ENCODE measurements at regions of chr5 and their contacts with region 1.

Region 1: DNA sequence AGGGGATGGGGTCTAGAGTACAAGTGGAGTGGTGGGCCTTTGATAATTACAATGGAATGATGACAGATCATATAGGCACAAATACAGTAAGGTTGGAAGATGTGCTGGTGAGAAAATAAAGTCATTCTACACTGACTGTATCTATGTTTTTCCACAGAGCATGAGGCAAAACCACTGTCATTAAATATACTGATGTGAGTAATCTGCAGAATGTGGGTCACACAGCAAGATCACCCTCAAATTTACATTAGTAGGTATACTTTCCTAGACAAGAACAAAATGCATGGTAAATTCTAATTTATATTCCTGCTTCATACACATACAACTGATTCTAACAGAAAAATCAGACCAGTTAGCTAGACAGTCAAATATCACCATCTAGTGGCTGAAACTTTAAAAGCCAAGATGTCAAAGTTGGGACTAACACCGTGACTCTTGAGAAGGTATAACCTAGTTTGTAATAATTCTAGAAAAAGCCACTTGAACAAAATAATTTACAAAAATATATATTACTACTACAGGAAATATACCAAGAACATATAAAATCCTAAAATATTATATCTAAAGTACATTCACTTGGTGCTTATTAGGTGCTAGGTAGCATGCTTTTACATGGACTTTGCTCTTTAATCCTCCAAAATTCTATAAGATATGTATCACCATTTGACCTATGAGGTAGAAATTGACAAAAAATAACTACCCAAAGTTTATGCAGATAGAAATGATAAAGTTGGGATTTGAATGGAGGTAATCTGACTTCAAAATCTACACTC is 19.5 kb downstream of the TTC33 start:
- DNase-seq: peak; percentile 48
- ATAC-seq: peak; percentile 69; the same call in 2 of the 3 replicates
- H3K4me3 ChIP-seq: no peak overlapping the region
- H3K27ac ChIP-seq: no peak overlapping the region
- H3K4me1 ChIP-seq: peaks cover 24% of the 10 kb centered on the region
- H3K27me3 ChIP-seq: no peaks in the 10 kb centered on the region
- CTCF ChIP-seq: peak; percentile 72
- EP300 ChIP-seq: no peak
- POLR2A ChIP-seq: no peak
- RAD21 ChIP-seq: peak; percentile 52; the same call in 1 of the 2 replicates

Region 2: DNA sequence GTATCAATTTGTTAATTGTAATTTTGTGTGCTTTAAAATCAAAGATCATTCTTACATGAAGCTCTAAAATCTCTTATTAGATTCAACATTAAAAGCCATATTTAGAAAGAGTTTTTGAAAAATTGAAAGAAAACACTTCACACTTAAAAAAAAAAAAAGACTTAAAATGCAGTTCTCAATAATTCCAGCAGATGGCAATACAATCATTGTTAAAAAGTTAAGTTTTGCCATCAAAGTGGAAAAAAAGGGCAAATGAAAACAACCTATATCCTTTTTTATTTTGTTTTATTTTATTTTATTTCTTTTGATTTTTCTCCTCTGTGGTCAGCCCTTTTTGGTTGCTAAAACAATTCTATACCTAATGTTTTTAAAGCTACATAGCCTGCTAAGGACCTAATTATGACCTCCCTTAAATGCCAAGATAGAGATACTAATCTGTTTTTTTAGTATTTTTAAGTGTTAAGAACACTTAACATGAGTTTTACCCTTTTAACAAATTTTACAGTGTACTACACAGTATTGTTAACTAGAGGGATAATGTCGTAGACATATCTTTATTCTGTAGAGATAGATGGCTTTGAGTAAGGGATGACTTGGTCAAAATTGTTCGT is 1157.3 kb before region 1 on chr5:
- CTCF ChIA-PET with region 1: no interaction called
- POLR2A ChIA-PET with region 1: no interaction called
- in situ Hi-C with region 1: no loop called
- intact Hi-C with region 1: loop called (anchors 5 kb)
- DNase-seq: no peak
- ATAC-seq: no peak
- H3K4me3 ChIP-seq: no peak overlapping the region
- H3K27ac ChIP-seq: no peak overlapping the region
- H3K4me1 ChIP-seq: no peaks in the 10 kb centered on the region
- H3K27me3 ChIP-seq: no peaks in the 10 kb centered on the region
- CTCF ChIP-seq: no peak
- EP300 ChIP-seq: no peak
- POLR2A ChIP-seq: no peak
- RAD21 ChIP-seq: no peak

Region 3: DNA sequence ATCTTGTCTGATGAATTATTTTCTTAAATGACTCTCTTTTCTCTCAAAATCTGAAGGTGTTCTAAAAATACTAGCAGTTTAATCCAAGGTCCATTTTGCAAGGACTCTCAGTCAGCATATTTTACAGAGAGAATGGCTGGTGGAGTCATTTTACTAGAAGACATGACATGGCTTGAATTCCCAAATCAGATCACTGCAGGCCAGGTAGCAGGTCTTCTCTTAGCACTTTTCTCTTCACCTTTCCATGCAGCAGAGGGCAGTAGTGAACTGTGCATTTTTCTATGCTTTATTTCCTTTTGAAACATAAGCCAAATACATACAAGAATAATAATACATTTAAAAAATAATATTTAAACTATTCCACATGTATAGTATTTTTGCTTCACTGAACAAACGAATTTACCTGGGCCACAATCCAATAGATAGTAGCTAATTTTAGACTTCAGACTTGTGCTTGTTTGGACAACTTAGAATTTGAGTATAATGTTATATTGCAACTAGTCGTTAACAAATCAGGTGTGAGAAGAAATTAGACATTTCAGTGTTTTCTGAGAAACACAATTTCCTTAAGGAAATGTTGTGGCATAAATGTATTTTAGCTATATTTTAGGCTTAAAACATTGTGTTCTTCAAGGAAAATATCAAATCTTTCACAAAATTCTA is 1022.1 kb before region 1 on chr5:
- CTCF ChIA-PET with region 1: no interaction called
- POLR2A ChIA-PET with region 1: no interaction called
- in situ Hi-C with region 1: no loop called
- intact Hi-C with region 1: loop called (anchors 1 kb)
- DNase-seq: peak; percentile 41
- ATAC-seq: peak; percentile 53
- H3K4me3 ChIP-seq: no peak overlapping the region
- H3K27ac ChIP-seq: no peak overlapping the region
- H3K4me1 ChIP-seq: peaks cover 6% of the 10 kb centered on the region; the same call in 1 of the 2 replicates
- H3K27me3 ChIP-seq: no peaks in the 10 kb centered on the region
- CTCF ChIP-seq: peak; percentile 63
- EP300 ChIP-seq: no peak
- POLR2A ChIP-seq: no peak
- RAD21 ChIP-seq: 0 out of 2 replicates have a peak, but pooled peaks have one; percentile 18